ENCODE measurements at regions of chr5 and their contacts with region 1.

Region 1: DNA sequence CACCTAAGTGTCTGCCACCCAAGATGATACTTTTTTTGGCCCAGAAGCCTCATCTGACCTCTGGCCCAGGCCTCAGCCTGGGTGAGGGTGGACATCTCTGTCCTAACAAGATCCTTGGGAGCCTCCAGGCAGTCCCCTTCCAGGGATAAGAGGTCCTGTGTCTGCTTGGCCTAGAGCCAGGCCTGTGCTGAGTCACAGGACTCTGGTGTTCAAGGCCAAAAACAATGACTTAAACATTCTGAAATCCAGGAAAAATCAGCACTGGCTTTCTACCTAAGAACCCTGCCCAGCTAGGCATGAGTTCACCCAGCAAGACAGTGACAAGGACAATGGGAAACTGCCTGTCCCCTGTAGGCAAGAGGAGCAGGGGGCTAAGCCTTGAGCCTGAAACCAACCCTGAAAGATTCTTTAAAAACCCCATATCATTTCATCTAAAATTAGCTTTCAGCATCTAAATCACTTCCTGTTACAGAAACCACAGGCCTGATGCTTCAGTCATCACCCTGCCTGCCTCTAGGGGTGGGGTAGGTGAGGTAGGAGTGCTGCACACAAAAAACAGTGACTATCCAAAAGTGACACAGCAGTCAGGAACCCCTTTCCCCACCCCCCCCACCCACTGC is 29.9 kb downstream of the CSF2 start:
- DNase-seq: peak in 1 of 2 donors; percentile 83
- H3K4me3 ChIP-seq: no peak overlapping the region
- H3K27ac ChIP-seq: peak overlapping the region; percentile 53
- H3K4me1 ChIP-seq: peaks cover 16% of the 10 kb centered on the region
- H3K27me3 ChIP-seq: no peaks in the 10 kb centered on the region
- CTCF ChIP-seq: no peak
- POLR2A ChIP-seq: no peak

Region 2: DNA sequence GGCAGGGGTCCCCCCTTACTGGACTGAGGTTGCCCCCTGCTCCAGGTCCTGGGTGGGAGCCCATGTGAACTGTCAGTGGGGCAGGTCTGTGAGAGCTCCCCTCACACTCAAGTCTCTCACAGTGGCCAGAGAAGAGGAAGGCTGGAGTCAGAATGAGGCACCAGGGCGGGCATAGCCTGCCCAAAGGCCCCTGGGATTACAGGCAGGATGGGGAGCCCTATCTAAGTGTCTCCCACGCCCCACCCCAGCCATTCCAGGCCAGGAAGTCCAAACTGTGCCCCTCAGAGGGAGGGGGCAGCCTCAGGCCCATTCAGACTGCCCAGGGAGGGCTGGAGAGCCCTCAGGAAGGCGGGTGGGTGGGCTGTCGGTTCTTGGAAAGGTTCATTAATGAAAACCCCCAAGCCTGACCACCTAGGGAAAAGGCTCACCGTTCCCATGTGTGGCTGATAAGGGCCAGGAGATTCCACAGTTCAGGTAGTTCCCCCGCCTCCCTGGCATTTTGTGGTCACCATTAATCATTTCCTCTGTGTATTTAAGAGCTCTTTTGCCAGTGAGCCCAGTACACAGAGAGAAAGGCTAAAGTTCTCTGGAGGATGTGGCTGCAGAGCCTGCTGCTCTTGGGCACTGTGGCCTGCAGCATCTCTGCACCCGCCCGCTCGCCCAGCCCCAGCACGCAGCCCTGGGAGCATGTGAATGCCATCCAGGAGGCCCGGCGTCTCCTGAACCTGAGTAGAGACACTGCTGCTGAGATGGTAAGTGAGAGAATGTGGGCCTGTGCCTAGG is 30.0 kb before region 1 on chr5 and contains the start of gene CSF2:
- intact Hi-C with region 1: no loop called
- DNase-seq: no peak
- H3K4me3 ChIP-seq: no peak within 1 kb of the TSS
- H3K27ac ChIP-seq: no peak within 1 kb of the TSS
- H3K4me1 ChIP-seq: no peaks in the 10 kb centered on the region
- H3K27me3 ChIP-seq: no peaks in the 10 kb centered on the region
- CTCF ChIP-seq: no peak
- POLR2A ChIP-seq: no peak
- total RNA-seq, gene CSF2: not detected

Region 3: DNA sequence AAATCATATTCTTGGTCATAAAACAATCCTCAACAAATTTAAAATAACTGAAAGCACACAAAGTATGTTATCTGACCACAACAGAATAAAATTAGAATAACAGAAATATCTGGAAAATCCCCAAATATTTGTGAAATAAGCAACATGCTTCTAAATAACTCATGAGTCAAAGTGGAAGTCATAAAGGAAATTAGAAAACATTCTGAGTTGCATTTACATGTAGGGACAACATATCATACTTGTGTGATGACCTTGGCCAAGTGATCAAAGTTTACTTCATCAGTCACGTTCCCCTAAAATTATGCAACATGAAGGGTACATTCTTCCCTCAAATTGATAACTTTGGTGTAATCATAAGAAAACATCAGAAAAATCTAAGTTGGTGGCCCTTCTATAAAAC is 34.8 kb after region 1 on chr5:
- intact Hi-C with region 1: no loop called
- DNase-seq: no peak
- H3K4me3 ChIP-seq: no peak overlapping the region
- H3K27ac ChIP-seq: no peak overlapping the region
- H3K4me1 ChIP-seq: no peaks in the 10 kb centered on the region
- H3K27me3 ChIP-seq: no peaks in the 10 kb centered on the region
- CTCF ChIP-seq: no peak
- POLR2A ChIP-seq: no peak

Region 4: GRCh38 chr5:133977161-133977787 is 1873.8 kb after region 1 on chr5:
- intact Hi-C with region 1: loop called (anchors 5 kb)
- DNase-seq: no peak
- H3K4me3 ChIP-seq: no peak overlapping the region
- H3K27ac ChIP-seq: no peak overlapping the region
- H3K4me1 ChIP-seq: no peaks in the 10 kb centered on the region
- H3K27me3 ChIP-seq: no peaks in the 10 kb centered on the region
- CTCF ChIP-seq: no peak
- POLR2A ChIP-seq: no peak

Measured in vagina (tissue), 2 donors.